ENCODE measurements at regions of chr16 and their contacts with region 1.

Region 1: GRCh38 chr16:58563235-58563634 is 47.9 kb downstream of the SETD6 start:
- DNase-seq: no peak
- ATAC-seq: no peak
- H3K4me3 ChIP-seq: no peak overlapping the region
- H3K27ac ChIP-seq: no peak overlapping the region
- H3K4me1 ChIP-seq: no peaks in the 10 kb centered on the region
- H3K27me3 ChIP-seq: no peaks in the 10 kb centered on the region
- CTCF ChIP-seq: no peak
- EP300 ChIP-seq: no peak
- POLR2A ChIP-seq: no peak
- RAD21 ChIP-seq: no peak

Region 2: GRCh38 chr16:57204675-57205074 is 1358.6 kb before region 1 on chr16:
- CTCF ChIA-PET with region 1: no interaction called
- POLR2A ChIA-PET with region 1: no interaction called
- RAD21 ChIA-PET with region 1: no interaction called
- SMC1A ChIA-PET with region 1: no interaction called
- in situ Hi-C with region 1: loop called (anchors 25 kb)
- intact Hi-C with region 1: no loop called
- DNase-seq: no peak
- ATAC-seq: peak; percentile 31; the same call in 1 of the 3 replicates
- H3K4me3 ChIP-seq: no peak overlapping the region
- H3K27ac ChIP-seq: no peak overlapping the region
- H3K4me1 ChIP-seq: no peaks in the 10 kb centered on the region
- H3K27me3 ChIP-seq: no peaks in the 10 kb centered on the region
- CTCF ChIP-seq: no peak
- EP300 ChIP-seq: no peak
- POLR2A ChIP-seq: no peak
- RAD21 ChIP-seq: no peak

Measured in GM12878 (cell line).